ENCODE measurements at regions of chr12 and their contacts with region 1.

Region 1: DNA sequence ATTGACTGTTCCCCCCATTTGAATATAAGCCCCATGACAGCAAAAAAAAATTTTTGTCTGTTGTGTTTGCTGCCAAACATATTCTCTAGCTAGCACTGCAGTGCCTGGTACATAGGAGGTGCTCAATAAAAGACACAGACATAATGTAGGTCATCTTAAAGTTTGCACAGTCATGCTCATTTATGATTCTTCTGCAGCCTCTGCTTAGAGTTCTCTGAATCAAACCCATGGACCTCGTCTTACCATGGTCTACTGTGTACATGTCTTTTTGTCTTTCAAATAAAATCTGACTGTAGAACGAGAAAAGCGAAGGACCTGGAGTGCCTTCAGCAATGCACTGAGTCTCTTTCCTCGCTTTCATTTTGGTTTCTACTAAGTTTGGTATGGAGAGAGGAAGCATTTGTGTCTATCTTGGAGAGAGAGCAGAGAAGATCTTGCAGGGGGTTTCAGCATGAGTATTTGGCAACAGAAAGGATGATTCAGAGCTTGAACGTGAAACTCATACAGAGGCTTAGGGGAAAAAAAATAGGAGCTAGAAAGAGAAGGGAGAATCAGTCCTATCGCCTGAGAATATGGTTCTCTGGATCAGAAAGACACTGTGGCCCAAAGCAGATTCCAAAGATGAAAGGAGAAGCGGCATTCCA is 38.8 kb upstream of the TMCC3 start:
- DNase-seq: peak; percentile 38
- H3K4me3 ChIP-seq: no peak overlapping the region
- H3K27ac ChIP-seq: no peak overlapping the region
- H3K4me1 ChIP-seq: no peaks in the 10 kb centered on the region
- H3K27me3 ChIP-seq: no peaks in the 10 kb centered on the region
- CTCF ChIP-seq: no peak

Region 2: GRCh38 chr12:93699271-93700145 is 989.6 kb before region 1 on chr12:
- CTCF ChIA-PET with region 1: no interaction called
- dilution Hi-C with region 1: no loop called
- in situ Hi-C with region 1: no loop called
- intact Hi-C with region 1: no loop called
- DNase-seq: peak; percentile 78
- H3K4me3 ChIP-seq: no peak overlapping the region
- H3K27ac ChIP-seq: no peak overlapping the region
- H3K4me1 ChIP-seq: peaks cover 8% of the 10 kb centered on the region
- H3K27me3 ChIP-seq: no peaks in the 10 kb centered on the region
- CTCF ChIP-seq: no peak

Region 3: DNA sequence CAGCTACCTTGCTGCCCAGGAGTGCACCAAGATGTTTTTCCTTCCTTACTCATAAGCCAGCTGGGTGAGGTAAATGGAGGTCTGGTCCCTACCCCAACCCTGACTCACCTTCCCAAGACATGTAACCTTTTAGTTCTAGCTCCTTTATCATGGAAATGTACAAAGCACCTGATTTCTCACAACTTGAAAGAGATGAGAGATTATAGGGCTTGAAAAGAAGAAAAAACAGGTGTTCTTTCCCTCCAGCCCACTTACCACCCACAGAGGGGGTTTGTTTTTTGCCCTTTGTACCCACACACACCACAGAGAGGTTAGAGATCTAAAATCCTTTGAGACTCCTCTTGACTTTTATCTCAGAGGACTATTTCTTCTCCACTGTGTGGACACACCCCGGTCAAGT is 519.6 kb before region 1 on chr12:
- CTCF ChIA-PET with region 1: interaction called, 28 read pairs
- dilution Hi-C with region 1: no loop called
- in situ Hi-C with region 1: no loop called
- intact Hi-C with region 1: no loop called
- DNase-seq: no peak
- H3K4me3 ChIP-seq: no peak overlapping the region
- H3K27ac ChIP-seq: no peak overlapping the region
- H3K4me1 ChIP-seq: no peaks in the 10 kb centered on the region
- H3K27me3 ChIP-seq: no peaks in the 10 kb centered on the region
- CTCF ChIP-seq: no peak